ENCODE measurements at regions of chr4 and their contacts with region 1.

Region 1: DNA sequence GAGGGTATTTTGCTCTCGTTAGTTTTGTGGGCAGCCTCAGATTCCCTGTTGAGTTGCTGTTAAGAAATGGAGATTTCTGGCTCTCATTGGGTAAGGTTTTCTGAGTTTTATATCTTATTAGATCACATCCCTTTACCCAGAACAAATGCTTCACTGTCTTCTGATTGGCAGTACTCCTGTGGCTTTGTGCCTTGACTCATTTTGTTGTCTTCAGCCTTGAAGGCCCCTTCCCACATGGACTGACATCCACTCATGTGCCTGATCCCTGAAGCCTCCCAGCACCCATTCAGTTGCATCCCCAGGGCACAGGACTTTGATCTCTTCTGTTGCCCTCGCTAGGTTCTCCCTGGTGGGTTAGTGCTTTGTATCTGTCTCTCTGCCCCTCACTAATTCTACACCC is 10.4 kb downstream of the MED28 start:
- DNase-seq: no peak
- ATAC-seq: no peak
- H3K4me3 ChIP-seq: no peak overlapping the region
- H3K27ac ChIP-seq: no peak overlapping the region
- H3K4me1 ChIP-seq: no peaks in the 10 kb centered on the region
- H3K27me3 ChIP-seq: no peaks in the 10 kb centered on the region
- CTCF ChIP-seq: no peak

Region 2: DNA sequence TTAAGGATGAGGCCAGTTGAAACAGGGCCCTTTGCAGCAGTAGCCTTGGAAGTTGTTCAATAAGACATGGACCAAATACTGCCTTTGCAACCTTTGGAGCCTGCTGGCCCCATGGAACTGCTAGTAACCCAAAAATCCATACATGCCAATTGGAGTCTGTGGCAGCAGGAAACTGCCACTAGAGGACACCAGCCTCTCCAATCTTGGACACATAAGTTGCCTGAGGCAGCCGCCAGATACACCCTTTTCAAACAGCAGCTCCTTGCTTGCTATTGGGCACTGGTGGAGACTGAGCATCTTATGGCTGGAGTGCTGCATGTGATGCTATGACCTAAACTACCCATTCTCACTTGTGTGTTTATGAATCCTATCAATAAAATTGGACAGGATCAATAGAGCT is 62.7 kb before region 1 on chr4:
- intact Hi-C with region 1: loop called (anchors 5 kb)
- DNase-seq: no peak
- ATAC-seq: no peak
- H3K4me3 ChIP-seq: no peak overlapping the region
- H3K27ac ChIP-seq: no peak overlapping the region
- H3K4me1 ChIP-seq: no peaks in the 10 kb centered on the region
- H3K27me3 ChIP-seq: no peaks in the 10 kb centered on the region
- CTCF ChIP-seq: no peak

Region 3: DNA sequence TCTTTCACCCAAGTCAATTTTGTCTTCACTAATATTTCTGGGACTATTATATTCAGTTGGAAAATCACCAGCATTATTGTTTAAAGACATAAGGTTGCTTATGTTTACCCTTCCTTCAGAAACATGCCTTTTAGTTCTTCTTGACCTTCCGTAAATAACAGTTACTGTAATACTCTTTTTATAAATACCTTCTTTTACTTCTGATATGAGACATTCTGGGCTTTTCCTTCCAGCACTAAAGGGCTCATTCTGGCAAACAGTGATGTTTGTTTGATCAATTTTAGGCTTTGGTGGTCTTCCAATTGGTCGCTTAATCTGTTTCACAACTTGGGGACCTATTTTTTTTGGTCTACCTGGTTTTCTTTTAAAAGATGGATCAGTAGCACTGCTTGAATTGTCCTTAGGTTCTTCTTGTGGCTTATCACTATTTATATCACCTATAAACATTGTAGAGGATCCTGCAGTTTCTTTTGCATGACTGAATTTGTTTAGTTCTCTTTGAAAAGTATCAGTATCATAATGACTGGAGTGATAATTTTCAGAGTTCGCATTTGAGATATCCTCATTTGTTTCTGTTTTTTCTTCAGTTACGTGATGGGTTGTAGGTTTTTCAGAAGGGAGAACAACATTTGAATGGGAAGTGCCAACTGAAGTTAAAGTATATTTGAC is 250.7 kb after region 1 on chr4:
- intact Hi-C with region 1: no loop called
- DNase-seq: no peak
- ATAC-seq: no peak
- H3K4me3 ChIP-seq: no peak overlapping the region
- H3K27ac ChIP-seq: no peak overlapping the region
- H3K4me1 ChIP-seq: no peaks in the 10 kb centered on the region
- H3K27me3 ChIP-seq: no peaks in the 10 kb centered on the region
- CTCF ChIP-seq: no peak